ENCODE measurements at regions of chr2 and their contacts with region 1.

Region 1: DNA sequence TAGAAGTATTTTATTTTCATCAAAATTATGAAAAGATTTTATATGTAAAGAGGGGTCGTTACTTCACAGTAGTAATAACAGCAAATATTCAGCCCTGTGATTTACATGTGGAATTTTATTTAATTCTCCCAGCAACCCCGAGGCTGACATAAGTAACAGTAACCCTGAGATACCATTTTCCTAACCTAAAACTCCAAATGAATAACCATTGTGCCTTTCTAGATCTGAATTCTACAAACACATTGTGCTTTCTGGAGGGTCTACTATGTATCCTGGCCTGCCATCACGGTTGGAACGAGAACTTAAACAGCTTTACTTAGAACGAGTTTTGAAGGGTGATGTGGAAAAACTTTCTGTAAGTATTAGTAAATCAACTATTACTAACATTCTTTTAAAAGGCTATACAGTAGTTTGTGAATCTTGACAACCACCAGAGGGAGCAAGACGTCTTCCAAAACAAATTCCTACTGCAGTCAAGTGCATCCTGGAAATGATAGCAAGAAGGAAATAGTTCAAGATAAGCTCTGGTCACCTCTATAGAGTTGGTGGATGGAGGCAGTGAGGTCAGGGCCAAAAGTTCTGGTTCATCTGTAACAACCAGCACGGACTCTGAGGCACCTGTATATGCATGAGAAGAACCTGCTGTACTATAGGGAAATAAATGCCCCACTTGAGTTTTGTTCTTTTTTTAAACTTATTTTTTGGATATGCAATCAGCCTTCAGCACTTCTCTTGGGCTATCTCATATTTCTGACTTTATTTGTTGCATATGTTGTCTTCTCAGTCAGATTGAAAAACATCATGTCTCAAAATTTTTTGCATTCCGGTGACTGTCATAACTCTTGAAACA is 37.4 kb downstream of the ACTR2 start:
- DNase-seq: peak; percentile 84
- H3K4me3 ChIP-seq: no peak overlapping the region
- H3K27ac ChIP-seq: no peak overlapping the region
- H3K4me1 ChIP-seq: peaks cover 27% of the 10 kb centered on the region
- H3K27me3 ChIP-seq: no peaks in the 10 kb centered on the region
- CTCF ChIP-seq: peak; percentile 85

Region 2: GRCh38 chr2:65278531-65278981 is 13.5 kb after region 1 on chr2:
- CTCF ChIA-PET with region 1: interaction called, 3 read pairs
- POLR2A ChIA-PET with region 1: interaction called, 13 read pairs
- intact Hi-C with region 1: no loop called
- DNase-seq: peak; percentile 83
- H3K4me3 ChIP-seq: no peak overlapping the region
- H3K27ac ChIP-seq: no peak overlapping the region
- H3K4me1 ChIP-seq: peaks cover 52% of the 10 kb centered on the region
- H3K27me3 ChIP-seq: no peaks in the 10 kb centered on the region
- CTCF ChIP-seq: no peak

Region 3: DNA sequence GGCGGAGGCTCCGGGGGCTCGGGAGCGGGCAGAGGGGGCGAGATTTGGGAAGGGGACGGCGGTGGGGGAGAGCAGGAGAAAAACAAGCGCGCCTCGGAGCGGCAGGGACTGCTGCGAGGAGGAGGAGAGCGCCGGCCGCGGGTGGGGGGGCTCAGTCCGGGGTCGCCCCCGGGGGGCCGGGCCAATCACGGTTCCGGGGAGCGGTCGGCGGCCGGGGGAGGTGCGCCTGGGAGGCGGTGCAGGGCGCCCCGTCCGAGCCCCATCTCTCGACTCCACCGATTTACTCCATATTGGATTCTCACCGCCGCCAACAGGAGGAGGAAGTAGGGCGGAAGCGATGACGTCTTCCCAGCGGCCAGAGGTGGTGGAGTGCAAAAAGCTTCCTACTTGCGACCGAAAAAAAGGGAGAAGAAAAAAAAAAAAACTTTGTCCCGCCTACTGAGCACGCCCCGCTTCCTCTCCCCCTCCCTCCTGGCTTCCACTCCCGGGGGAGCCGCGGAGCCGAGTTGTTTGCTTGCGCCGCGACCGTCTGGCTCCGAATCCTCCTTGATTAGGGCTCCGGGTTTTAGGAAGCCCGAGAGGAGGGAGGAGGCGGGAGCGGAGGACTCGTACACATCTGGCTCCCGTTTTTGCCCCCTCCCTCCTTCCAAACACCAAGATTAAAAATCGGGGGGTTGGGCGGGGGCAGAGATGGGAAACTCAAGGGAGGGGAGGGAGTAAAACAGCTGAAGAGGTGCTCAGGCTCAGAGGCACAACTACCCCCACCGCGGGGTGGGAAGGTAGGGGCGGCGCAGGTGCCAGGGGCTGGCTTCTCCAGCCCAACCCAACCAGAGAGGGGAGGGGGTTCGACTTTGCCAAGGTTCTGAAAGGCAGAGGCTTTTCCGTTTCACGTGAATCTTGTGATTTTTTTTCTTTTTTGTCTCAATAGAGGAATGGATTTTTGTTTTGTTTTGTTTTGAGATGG is 167.5 kb after region 1 on chr2 and contains the start of gene SPRED2:
- CTCF ChIA-PET with region 1: no interaction called
- POLR2A ChIA-PET with region 1: no interaction called
- intact Hi-C with region 1: loop called (anchors 2 kb)
- DNase-seq: peak; percentile 99
- H3K4me3 ChIP-seq: peak within 1 kb of the TSS; percentile 97
- H3K27ac ChIP-seq: peak within 1 kb of the TSS; percentile 96
- H3K4me1 ChIP-seq: peaks cover 20% of the 10 kb centered on the region
- H3K27me3 ChIP-seq: no peaks in the 10 kb centered on the region
- CTCF ChIP-seq: no peak
- total RNA-seq, gene SPRED2: 79.4 and 81.0 TPM in 2 replicates

Region 4: GRCh38 chr2:65464604-65465003 is 199.6 kb after region 1 on chr2:
- CTCF ChIA-PET with region 1: no interaction called
- POLR2A ChIA-PET with region 1: no interaction called
- intact Hi-C with region 1: loop called (anchors 10 kb)
- DNase-seq: peak; percentile 68
- H3K4me3 ChIP-seq: no peak overlapping the region
- H3K27ac ChIP-seq: peak overlapping the region; percentile 71
- H3K4me1 ChIP-seq: peaks cover 31% of the 10 kb centered on the region
- H3K27me3 ChIP-seq: no peaks in the 10 kb centered on the region
- CTCF ChIP-seq: no peak

Region 5: GRCh38 chr2:65554765-65555591 is 289.9 kb after region 1 on chr2:
- CTCF ChIA-PET with region 1: interaction called, 8 read pairs
- POLR2A ChIA-PET with region 1: no interaction called
- intact Hi-C with region 1: loop called (anchors 1 kb)
- DNase-seq: no peak
- H3K4me3 ChIP-seq: no peak overlapping the region
- H3K27ac ChIP-seq: no peak overlapping the region
- H3K4me1 ChIP-seq: no peaks in the 10 kb centered on the region
- H3K27me3 ChIP-seq: no peaks in the 10 kb centered on the region
- CTCF ChIP-seq: no peak

Region 6: DNA sequence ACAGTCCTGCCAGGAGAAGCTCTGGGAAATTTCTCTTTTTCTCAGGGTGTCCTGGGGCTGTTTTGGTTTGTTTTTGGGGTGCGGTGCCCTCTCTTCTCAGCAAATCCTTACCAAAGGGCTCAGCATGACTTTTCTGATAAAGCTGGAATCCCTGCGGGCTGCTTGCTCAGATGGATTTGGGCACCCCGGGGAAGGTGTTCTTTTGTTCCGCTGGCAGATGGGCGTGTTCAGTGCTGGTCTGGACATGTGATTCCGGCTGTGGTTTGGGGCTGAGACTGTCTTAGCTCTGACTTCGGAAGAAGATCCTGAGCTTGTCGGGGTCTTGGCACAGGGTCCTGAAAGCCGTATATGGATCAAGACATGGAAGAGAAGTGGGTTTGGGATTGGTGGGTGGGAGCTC is 301.6 kb after region 1 on chr2:
- CTCF ChIA-PET with region 1: interaction called, 10 read pairs
- POLR2A ChIA-PET with region 1: no interaction called
- intact Hi-C with region 1: no loop called
- DNase-seq: peak; percentile 81
- H3K4me3 ChIP-seq: peak overlapping the region; percentile 20
- H3K27ac ChIP-seq: peak overlapping the region; percentile 7
- H3K4me1 ChIP-seq: peaks cover 20% of the 10 kb centered on the region
- H3K27me3 ChIP-seq: no peaks in the 10 kb centered on the region
- CTCF ChIP-seq: no peak

Region 7: DNA sequence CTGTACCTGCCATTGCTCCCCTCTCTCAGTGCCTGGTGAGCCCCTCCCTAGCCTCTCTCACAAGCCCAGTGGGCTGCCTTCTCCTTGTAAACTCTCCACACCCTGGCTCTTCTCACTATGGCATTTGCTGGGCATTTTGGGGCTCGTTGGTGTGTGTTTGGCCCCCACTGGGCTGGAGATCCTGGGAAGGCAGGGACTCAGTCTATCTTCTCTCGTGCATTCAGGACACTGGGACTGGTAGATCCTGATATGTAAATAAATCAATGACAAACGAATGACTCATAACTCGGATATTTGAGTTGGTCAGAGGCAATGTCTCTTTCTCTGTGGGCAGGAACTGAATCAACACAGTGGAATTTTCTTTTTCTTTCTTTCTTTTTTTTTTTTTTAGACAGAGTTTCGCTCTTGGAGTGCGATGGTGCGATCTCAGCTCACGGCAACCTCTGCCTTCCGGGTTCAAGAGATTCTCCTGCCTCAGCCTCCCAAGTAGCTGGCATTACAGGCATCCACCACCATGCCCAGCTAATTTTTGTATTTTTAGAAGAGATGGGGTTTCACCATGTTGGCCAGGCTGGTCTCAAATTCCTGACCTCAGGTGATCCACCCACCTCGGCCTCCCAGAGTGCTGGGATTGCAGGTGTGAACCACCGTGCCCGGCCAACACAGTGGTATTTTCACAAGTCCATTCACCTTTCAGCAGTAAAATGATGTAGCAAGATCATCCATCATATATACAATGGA is 312.0 kb after region 1 on chr2:
- CTCF ChIA-PET with region 1: no interaction called
- POLR2A ChIA-PET with region 1: no interaction called
- intact Hi-C with region 1: loop called (anchors 1 kb)
- DNase-seq: peak; percentile 86
- H3K4me3 ChIP-seq: no peak overlapping the region
- H3K27ac ChIP-seq: peak overlapping the region; percentile 39
- H3K4me1 ChIP-seq: peaks cover 16% of the 10 kb centered on the region
- H3K27me3 ChIP-seq: no peaks in the 10 kb centered on the region
- CTCF ChIP-seq: no peak

Region 8: DNA sequence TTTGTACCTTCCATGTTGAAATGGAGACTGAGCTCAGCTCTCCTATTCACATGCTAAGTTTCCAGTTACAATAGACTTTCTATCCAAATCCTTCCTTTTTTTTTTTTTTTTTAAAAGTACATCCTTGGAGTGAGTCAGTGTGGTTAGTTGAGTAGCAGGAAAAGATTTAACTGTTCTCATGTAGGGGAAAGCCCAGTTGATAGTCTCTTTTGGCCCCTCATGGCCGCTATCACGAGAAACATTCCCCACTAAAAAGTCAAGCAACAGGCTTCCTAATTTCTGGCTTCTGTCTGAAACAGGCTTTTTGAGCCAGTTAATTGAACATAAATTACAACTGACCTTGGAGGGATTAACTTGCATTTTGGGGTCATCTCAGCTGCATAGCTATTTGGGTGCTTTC is 1331.2 kb after region 1 on chr2:
- CTCF ChIA-PET with region 1: no interaction called
- POLR2A ChIA-PET with region 1: no interaction called
- intact Hi-C with region 1: no loop called
- DNase-seq: no peak
- H3K4me3 ChIP-seq: no peak overlapping the region
- H3K27ac ChIP-seq: no peak overlapping the region
- H3K4me1 ChIP-seq: peaks cover 4% of the 10 kb centered on the region
- H3K27me3 ChIP-seq: no peaks in the 10 kb centered on the region
- CTCF ChIP-seq: no peak